HCT116 (cell line): ENCODE measurements at regions of chr16 and their contacts with region 1.

Region 1: DNA sequence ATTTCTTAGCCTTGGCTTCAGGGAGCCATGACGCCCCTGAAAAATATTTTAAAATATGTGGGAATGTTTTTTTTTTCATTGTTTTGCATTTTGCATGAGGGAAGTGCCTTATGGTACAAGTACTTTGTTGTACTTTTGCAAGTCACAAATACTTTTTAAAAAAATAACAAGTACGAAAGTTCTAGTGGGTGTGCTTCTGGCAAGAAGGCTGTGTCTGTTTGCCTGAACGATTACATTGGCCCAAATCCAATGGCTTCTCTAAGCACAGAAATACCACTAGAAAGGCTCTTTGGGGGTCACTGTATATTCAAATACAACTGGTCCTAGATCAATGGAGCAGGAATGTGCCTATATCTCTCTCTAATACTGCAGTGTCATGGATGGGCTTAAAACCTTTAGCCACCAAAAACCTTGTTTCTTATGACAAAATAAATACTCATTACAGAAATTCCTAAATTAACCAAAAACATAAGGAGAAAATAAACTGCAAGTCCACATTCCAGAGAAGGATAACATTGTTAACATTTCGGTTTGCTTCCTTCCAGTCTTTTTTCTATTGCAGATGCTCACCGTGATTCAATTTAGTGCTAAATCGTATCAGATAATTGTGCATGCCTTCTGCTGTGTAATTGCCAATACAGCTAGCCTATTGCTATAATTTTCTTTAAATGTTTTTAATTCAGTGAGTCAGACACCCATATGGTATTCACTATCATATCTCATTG is 97.4 kb downstream of the VAT1L start:
- DNase-seq: no peak
- ATAC-seq: no peak
- H3K4me3 ChIP-seq: no peak overlapping the region
- H3K27ac ChIP-seq: no peak overlapping the region
- H3K4me1 ChIP-seq: no peaks in the 10 kb centered on the region
- H3K27me3 ChIP-seq: peaks cover 76% of the 10 kb centered on the region
- CTCF ChIP-seq: no peak
- POLR2A ChIP-seq: no peak
- RAD21 ChIP-seq: no peak

Region 2: GRCh38 chr16:77834635-77835540 is 50.8 kb before region 1 on chr16:
- CTCF ChIA-PET with region 1: no interaction called
- POLR2A ChIA-PET with region 1: no interaction called
- RAD21 ChIA-PET with region 1: no interaction called
- intact Hi-C with region 1: loop called (anchors 5 kb)
- DNase-seq: no peak
- ATAC-seq: no peak
- H3K4me3 ChIP-seq: no peak overlapping the region
- H3K27ac ChIP-seq: no peak overlapping the region
- H3K4me1 ChIP-seq: peaks cover 0 to 5% of the 10 kb centered on the region in 2 experiments; a peak in 1 of 4 replicates
- H3K27me3 ChIP-seq: peaks cover 22% of the 10 kb centered on the region
- CTCF ChIP-seq: no peak
- POLR2A ChIP-seq: no peak
- RAD21 ChIP-seq: no peak